A673 (cell line): ENCODE measurements at regions of chr6 and their contacts with region 1.

Region 1: GRCh38 chr6:160000280-160000704 is 31.4 kb downstream of the IGF2R start:
- DNase-seq: peak; percentile 45
- H3K4me3 ChIP-seq: no peak overlapping the region
- H3K27ac ChIP-seq: no peak overlapping the region
- H3K4me1 ChIP-seq: peaks cover 11% of the 10 kb centered on the region
- H3K27me3 ChIP-seq: no peaks in the 10 kb centered on the region
- CTCF ChIP-seq: no peak

Region 2: GRCh38 chr6:158361961-158362669 is 1638.2 kb before region 1 on chr6:
- CTCF ChIA-PET with region 1: no interaction called
- POLR2A ChIA-PET with region 1: no interaction called
- intact Hi-C with region 1: no loop called
- DNase-seq: no peak
- H3K4me3 ChIP-seq: no peak overlapping the region
- H3K27ac ChIP-seq: no peak overlapping the region
- H3K4me1 ChIP-seq: no peaks in the 10 kb centered on the region
- H3K27me3 ChIP-seq: no peaks in the 10 kb centered on the region
- CTCF ChIP-seq: no peak

Region 3: GRCh38 chr6:159716247-159717096 is 283.8 kb before region 1 on chr6:
- CTCF ChIA-PET with region 1: interaction called, 14 read pairs
- POLR2A ChIA-PET with region 1: no interaction called
- intact Hi-C with region 1: no loop called
- DNase-seq: peak; percentile 52
- H3K4me3 ChIP-seq: no peak overlapping the region
- H3K27ac ChIP-seq: no peak overlapping the region
- H3K4me1 ChIP-seq: no peaks in the 10 kb centered on the region
- H3K27me3 ChIP-seq: no peaks in the 10 kb centered on the region
- CTCF ChIP-seq: no peak